Activated CD4-positive, alpha-beta T cell treated with anti-CD3 and anti-CD28 coated beads, Interleukin-2, amount 10 ng/mL, durations not matched to agents 7 days and 5 days (primary cell): ENCODE measurements at regions of chr2 and their contacts with region 1.

Region 1: DNA sequence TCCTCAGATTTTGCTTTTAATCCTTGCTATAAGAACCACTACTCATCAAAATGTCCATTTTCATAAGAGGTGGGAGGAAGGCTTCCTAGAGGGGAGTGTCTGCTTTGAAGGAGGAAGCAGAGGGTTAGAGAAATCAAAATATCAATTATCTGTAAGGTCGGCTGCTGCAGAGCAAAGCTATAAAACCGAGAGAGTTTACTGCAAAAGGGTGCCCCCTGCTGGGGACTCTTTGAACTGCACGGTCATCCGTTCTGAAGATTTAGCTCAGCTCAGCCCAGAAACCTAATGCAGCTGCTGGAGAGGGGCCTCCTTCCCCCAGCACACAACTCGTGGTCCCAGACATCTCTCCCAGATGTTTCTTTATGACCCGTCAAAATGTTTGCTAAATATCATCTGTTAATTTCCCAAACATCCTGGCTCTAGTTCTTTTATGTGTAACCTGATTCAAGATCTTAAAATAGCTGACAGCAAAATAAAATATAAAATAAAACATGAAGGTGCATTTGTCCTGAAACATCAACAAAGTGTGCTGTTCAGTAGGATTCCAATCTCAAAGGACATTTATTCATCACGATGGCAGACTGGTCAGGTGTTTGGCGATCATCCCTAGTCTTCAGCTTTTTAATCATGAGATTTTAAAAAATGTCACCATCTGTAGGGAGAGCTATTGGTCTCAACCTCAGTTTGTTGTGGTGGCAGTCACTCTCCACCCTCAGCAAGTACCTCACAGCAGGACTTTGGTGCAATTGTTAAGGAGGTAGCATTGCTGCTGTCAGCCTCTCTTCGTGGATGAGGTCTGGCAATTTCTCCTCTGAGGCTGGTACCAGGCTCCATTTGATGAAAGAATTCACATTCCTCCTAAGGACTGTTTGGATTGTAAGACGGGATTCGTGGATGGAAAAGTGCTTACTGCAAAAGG is 185.9 kb downstream of the MTX2 start:
- DNase-seq: peak; percentile 82
- H3K4me3 Mint-ChIP-seq: no peak overlapping the region
- H3K27ac Mint-ChIP-seq: no peak overlapping the region
- H3K4me1 Mint-ChIP-seq: no peaks in the 10 kb centered on the region
- H3K27me3 Mint-ChIP-seq: peaks cover 32% of the 10 kb centered on the region

Region 2: GRCh38 chr2:176443946-176444345 is 11.2 kb before region 1 on chr2:
- CTCF ChIA-PET with region 1: interaction called, 12 read pairs
- POLR2A ChIA-PET with region 1: no interaction called
- DNase-seq: no peak
- H3K4me3 Mint-ChIP-seq: no peak overlapping the region
- H3K27ac Mint-ChIP-seq: no peak overlapping the region
- H3K4me1 Mint-ChIP-seq: no peaks in the 10 kb centered on the region
- H3K27me3 Mint-ChIP-seq: peaks cover 3% of the 10 kb centered on the region